Sciatic nerve (tissue), 2 donors: ENCODE measurements at regions of chr14 and their contacts with region 1.

Region 1: GRCh38 chr14:56145965-56146364 is 27.8 kb downstream of the PELI2 start:
- DNase-seq: no peak
- ATAC-seq: no peak

Region 2: GRCh38 chr14:54226103-54226502 is 1919.9 kb before region 1 on chr14:
- intact Hi-C with region 1: no loop called
- DNase-seq: no peak
- ATAC-seq: no peak

Region 3: DNA sequence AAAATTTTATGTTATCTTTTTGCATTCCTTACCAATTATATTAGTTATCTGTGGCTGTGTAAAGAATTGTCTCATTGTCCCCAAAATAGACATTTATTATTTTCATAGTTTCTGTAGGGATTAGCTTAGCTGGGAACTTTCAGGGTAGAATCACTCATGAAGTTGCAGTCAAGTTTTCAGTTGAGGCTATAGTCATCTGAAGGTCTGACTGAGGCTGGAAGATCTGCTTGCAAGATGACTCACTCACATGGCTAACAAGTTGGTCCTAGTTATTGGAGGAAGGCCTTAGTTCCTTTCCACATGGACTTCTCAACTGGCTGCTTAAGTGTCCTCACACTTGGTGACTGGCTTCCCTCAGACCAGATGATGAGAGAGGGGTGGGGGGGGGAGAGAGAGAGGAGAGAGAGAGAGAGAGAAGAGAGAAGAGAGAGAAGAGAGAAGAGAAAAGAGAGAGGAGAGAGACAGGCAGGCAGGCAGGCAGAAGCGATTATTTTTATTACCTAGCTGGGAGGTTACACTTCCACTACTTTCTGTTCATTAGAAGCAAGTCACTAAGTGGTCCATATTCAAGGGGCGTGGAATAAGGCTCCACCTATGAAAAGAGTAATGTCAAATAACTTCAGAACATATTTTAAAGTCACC is 1129.2 kb after region 1 on chr14:
- intact Hi-C with region 1: loop called (anchors 10 kb)
- DNase-seq: no peak
- ATAC-seq: no peak